ENCODE measurements at regions of chr6 and their contacts with region 1.

Region 1: GRCh38 chr6:73732845-73733675 is 37.1 kb downstream of the CD109 start:
- DNase-seq: peak; percentile 51
- ATAC-seq: peak; percentile 91
- H3K4me3 ChIP-seq: no peak overlapping the region
- H3K27ac ChIP-seq: no peak overlapping the region
- H3K4me1 ChIP-seq: no peaks in the 10 kb centered on the region
- H3K27me3 ChIP-seq: no peaks in the 10 kb centered on the region
- CTCF ChIP-seq: peak; percentile 89

Region 2: GRCh38 chr6:73675466-73676098 is 57.5 kb before region 1 on chr6:
- intact Hi-C with region 1: loop called (anchors 10 kb)
- DNase-seq: peak; percentile 71
- ATAC-seq: peak; percentile 92
- H3K4me3 ChIP-seq: no peak overlapping the region
- H3K27ac ChIP-seq: no peak overlapping the region
- H3K4me1 ChIP-seq: no peaks in the 10 kb centered on the region
- H3K27me3 ChIP-seq: no peaks in the 10 kb centered on the region
- CTCF ChIP-seq: peak; percentile 88